Activated CD4-positive, alpha-beta memory T cell treated with anti-CD3 and anti-CD28 coated beads for 36 hours (primary cell): ENCODE measurements at regions of chr9 and their contacts with region 1.

Region 1: DNA sequence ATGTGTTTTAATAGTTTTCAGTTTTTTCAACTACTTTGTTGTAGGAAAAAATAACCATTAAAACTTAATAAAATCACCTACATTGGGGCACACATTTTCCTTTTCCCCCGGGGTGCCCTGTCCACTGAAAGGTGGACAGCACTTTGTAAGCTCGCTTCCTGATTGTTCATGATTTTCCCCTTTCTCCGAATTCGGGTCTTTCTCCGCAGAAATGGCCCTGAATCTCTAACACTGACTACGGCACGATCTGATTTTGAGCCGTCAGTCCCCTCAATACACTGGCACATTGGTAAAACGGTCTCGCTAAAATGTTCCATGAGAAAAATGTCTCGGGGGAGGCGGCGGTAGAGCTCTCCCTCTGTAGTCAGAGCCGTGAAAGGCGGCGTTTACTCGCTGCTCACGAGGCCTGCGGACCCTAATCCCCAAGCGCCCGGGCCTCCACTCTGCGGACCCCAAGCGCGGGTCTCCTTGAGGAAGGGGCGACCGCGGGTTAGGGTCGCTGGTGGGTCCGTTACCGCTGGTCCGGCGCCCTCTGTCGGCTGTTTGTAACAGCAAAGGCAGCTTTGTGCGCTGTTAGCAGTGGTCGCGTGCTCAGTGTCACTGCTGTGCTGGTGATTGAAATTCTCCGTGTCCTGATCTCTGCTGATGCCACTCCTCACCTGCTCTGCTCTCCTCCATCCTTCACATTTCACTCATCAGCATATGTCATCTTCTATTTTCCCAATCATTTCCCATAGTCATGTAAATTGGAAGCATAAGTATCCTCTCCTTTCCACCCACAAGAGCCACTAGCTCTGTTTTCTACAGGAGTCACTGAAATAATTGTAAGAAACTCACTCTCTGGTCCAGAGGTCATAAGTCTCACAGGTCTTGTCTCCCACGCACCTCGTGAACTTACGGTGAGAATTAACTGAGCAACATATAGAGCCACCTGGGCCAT is 10.8 kb upstream of the IFNA2 start:
- DNase-seq: peak; percentile 64
- H3K4me3 Mint-ChIP-seq: peak overlapping the region; percentile 66
- H3K27ac Mint-ChIP-seq: no peak overlapping the region
- H3K4me1 Mint-ChIP-seq: peaks cover 11% of the 10 kb centered on the region
- H3K27me3 Mint-ChIP-seq: peaks cover 54% of the 10 kb centered on the region

Region 2: DNA sequence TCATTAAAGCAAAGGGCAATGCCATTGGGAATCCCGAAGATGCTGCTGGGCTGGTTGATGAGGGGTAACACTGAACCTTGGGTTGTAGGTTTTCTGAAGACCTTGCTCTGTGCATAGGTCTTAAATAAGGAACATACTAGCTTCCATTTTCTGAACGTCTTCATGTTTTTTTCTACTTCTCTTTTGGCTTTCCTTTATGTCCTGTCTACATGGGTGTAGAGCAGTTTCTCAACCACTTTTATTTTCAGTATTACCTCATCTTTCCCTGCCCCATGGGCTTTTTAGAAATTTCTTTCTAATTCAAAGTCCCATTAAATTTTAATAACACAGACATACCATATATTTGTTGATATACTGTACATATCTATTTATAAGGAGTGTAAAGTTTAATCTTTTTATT is 156.1 kb before region 1 on chr9 and contains the start of gene IFNA14:
- CTCF ChIA-PET with region 1: interaction called, 13 read pairs
- POLR2A ChIA-PET with region 1: no interaction called
- intact Hi-C with region 1: loop called (anchors 10 kb)
- DNase-seq: no peak
- H3K4me3 Mint-ChIP-seq: no peak within 1 kb of the TSS
- H3K27ac Mint-ChIP-seq: no peak within 1 kb of the TSS
- H3K4me1 Mint-ChIP-seq: peaks cover 9% of the 10 kb centered on the region
- H3K27me3 Mint-ChIP-seq: peaks cover 11% of the 10 kb centered on the region
- total RNA-seq, gene IFNA14: not detected

Region 3: DNA sequence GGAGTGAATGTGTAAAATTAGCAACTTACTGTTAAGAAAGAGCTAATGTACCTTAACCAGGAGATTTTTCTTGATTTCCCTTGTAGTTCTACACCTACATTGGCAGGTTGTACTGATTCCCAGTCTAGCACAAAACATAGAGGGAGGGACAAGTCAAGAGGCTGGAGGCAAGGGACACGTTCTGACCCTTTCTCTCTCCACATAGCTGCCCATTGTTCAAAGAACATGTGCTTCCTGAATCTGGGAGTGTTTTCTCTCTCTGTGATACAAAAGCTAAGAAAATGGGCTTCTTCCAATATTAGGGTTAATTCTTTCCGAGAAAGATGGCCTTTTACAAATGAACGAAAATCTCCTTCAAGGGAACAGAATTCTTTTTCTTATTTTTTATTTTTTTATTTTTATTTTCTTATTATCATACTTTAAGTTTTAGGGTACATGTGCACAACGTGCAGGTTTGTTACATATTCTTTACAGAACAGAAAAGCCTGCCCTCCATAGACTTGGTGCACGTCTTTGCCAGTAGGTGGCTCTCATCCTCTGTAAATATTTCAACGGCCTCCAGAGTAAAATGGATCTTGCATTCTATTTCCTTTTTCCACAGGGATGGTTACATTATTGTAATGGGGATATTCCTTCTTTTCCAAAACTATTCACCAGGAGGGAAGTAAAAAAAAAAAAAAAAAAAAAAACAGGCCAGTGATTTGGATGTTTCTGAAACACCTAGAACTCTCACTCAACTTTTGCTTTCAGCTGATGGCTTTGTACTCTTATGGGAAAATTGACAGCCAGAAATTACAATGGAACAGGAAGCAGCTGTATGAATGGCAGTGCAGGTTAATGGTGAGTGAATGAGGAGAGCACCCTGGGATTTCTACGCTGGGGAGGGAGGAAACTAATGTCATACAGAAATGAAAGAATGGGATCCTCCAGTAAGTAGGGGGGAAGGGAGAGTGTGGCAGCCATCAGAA is 77.8 kb before region 1 on chr9:
- CTCF ChIA-PET with region 1: interaction called, 24 read pairs
- POLR2A ChIA-PET with region 1: no interaction called
- intact Hi-C with region 1: no loop called
- DNase-seq: peak; percentile 48
- H3K4me3 Mint-ChIP-seq: no peak overlapping the region
- H3K27ac Mint-ChIP-seq: no peak overlapping the region
- H3K4me1 Mint-ChIP-seq: peaks cover 1% of the 10 kb centered on the region
- H3K27me3 Mint-ChIP-seq: no peaks in the 10 kb centered on the region

Region 4: DNA sequence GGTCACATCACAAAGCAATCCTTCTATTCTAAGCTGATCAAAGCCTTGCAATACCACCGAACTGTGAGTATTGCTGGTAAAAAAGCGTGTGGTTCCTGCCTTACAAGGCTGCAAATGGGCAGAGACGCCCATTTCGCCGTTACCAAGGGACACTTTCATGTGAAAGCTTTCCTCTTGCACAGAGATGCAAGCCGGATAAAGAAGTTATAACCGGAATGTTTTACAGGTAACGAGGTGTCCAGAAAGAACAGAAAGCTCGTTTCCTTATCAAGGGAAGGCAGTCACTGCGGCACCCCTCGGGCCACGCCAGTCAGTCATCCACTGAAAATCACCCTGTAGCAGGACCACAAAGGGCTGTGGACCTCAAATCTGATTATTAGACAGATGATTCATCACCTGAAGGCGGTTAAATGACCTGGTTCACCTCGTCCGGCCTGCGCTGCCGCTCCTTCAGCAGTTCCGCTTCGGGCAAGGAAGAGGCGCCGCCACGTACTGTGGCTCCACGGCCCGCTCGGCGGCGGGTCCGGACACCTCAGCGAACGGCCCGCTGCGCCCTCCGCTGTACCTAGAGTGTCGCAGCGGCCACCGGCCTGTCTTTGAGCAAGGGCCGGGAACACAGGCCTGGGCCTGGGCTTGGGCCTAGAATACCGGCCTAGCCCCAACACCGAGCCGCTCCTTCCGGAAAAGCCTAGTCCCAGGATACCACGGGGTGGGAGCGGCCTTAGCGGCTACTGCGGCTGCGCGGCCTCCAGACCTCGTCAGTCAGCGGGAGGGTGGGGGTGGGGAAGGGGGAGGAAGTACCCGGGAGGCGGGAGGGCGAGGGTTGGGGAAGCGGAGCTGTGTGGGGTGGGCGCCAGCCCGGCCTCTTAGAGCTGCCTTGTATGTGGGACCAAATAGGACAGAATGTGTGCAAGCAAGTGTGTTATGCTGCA is 61.1 kb before region 1 on chr9 and contains the start of gene KLHL9:
- CTCF ChIA-PET with region 1: interaction called, 74 read pairs
- POLR2A ChIA-PET with region 1: interaction called, 3 read pairs
- intact Hi-C with region 1: no loop called
- DNase-seq: peak; percentile 92
- H3K4me3 Mint-ChIP-seq: peak within 1 kb of the TSS; percentile 86
- H3K27ac Mint-ChIP-seq: peak within 1 kb of the TSS; percentile 87
- H3K4me1 Mint-ChIP-seq: peaks cover 50% of the 10 kb centered on the region
- H3K27me3 Mint-ChIP-seq: no peaks in the 10 kb centered on the region
- total RNA-seq, gene KLHL9: 15.9 to 16.0 TPM

Region 5: DNA sequence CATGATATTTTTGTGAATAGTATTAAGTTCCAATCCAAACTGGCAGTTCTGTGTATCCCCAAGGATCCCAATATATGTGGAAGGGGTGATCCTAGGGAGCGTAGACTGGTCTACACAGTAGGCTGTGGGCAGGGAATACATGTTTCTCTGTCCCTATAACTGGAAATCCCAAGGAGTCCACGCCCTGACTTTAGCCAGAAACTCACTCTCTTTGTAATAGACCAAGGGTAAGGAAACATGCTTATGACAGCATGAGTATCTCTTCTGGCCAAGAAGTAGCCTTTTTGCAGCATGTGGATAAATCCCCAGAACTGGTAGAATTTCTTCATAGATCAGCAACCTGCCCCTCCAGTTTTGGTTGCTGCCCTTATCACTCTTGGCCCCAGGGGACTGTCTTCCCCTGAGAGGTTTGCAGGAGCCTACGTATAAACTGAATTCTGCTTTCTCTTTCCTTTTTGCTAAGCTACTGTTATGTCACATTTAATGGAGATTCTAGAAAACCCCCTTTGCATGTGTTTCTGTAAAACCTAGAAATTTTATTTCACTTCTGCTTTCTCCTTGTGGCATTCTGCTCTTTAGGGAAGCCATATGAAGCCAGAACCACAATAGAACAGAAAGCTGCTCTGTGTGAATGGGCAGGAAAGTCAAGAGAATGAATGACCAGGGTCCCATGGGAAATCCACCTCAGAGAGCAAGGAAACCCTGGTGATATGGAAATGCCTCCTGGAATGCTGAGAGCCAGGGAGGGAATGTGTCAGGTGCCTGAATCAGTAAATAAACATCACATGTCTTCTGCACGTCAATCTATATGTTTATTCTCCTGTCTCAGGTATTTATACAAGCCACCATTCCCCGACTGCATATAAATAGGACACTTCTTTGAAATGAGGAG is 14.4 kb before region 1 on chr9:
- CTCF ChIA-PET with region 1: interaction called, 12 read pairs
- POLR2A ChIA-PET with region 1: no interaction called
- intact Hi-C with region 1: no loop called
- DNase-seq: peak; percentile 25
- H3K4me3 Mint-ChIP-seq: no peak overlapping the region
- H3K27ac Mint-ChIP-seq: no peak overlapping the region
- H3K4me1 Mint-ChIP-seq: peaks cover 13% of the 10 kb centered on the region
- H3K27me3 Mint-ChIP-seq: peaks cover 35% of the 10 kb centered on the region